Calu3 (cell line): ENCODE measurements at regions of chr5 and their contacts with region 1.

Region 1: GRCh38 chr5:80967500-80968181 is 7.5 kb downstream of the RASGRF2 start:
- DNase-seq: peak; percentile 77
- H3K4me3 Mint-ChIP-seq: peak overlapping the region; percentile 66
- H3K27ac Mint-ChIP-seq: peak overlapping the region; percentile 98
- H3K4me1 Mint-ChIP-seq: peaks cover 71% of the 10 kb centered on the region
- H3K27me3 Mint-ChIP-seq: no peaks in the 10 kb centered on the region
- CTCF ChIP-seq: no peak

Region 2: DNA sequence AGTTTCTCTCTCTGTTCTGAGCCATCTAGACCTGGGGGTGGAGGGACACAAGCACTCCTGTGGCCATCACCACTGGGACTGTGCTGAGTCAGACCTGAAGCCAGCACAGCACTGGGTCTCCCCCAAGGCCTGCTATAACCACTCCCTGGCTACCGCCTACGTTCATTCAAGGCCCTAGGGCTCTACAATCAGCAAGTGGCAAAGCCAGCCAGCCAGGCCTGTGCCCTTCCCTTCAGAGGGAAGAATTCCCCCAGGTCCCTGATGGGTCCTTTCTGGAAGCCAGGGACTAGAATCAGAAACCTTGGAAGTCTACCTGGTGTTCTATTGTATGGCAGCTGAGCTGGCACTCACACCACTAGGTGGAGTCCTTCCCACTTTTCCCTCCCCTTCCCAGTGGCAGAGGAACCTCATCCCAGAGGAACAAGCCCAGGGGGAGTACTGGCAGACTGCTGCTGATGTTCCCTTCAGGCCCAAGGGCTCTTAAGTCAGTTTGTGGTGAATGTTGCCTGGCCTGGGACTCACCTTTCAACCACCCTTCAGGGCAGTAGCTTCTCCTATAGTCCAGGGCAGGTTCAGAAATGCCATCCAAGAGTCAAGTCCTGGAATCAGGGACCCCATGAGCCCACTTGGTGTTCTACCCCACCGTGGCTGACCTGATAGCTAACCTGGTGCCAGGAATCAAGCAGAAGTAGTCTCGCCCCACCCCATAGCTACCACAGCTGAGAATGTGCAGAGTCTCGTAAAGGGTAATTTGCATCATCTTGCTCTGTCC is 1711.7 kb before region 1 on chr5:
- CTCF ChIA-PET with region 1: no interaction called
- intact Hi-C with region 1: no loop called
- DNase-seq: peak; percentile 74
- H3K4me3 Mint-ChIP-seq: no peak overlapping the region
- H3K27ac Mint-ChIP-seq: no peak overlapping the region
- H3K4me1 Mint-ChIP-seq: peaks cover 18% of the 10 kb centered on the region
- H3K27me3 Mint-ChIP-seq: no peaks in the 10 kb centered on the region
- CTCF ChIP-seq: peak; percentile 83

Region 3: DNA sequence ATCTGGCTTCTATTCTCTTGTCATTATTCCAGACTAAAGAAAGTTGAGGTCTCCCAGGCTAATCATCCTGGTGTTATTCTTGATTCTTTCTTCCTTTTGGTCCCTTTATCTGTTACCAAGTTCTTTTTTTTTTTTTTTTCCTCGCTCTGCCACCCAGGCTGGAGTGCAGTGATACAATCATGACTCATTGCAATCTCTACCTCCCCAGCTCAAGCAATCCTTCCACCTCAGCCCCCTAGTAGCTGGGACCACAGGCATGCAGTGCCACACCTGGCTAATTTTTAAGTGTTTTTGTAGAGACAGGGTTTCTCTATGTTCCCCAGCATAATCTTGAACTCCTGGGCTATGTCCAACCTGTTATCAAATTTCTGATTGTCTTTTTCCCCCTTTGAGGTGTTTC is 186.3 kb before region 1 on chr5:
- CTCF ChIA-PET with region 1: no interaction called
- intact Hi-C with region 1: loop called (anchors 5 kb)
- DNase-seq: peak; percentile 64
- H3K4me3 Mint-ChIP-seq: no peak overlapping the region
- H3K27ac Mint-ChIP-seq: peak overlapping the region; percentile 73
- H3K4me1 Mint-ChIP-seq: peaks cover 22% of the 10 kb centered on the region
- H3K27me3 Mint-ChIP-seq: no peaks in the 10 kb centered on the region
- CTCF ChIP-seq: no peak